A549 (cell line): ENCODE measurements at regions of chr16 and their contacts with region 1.

Region 1: DNA sequence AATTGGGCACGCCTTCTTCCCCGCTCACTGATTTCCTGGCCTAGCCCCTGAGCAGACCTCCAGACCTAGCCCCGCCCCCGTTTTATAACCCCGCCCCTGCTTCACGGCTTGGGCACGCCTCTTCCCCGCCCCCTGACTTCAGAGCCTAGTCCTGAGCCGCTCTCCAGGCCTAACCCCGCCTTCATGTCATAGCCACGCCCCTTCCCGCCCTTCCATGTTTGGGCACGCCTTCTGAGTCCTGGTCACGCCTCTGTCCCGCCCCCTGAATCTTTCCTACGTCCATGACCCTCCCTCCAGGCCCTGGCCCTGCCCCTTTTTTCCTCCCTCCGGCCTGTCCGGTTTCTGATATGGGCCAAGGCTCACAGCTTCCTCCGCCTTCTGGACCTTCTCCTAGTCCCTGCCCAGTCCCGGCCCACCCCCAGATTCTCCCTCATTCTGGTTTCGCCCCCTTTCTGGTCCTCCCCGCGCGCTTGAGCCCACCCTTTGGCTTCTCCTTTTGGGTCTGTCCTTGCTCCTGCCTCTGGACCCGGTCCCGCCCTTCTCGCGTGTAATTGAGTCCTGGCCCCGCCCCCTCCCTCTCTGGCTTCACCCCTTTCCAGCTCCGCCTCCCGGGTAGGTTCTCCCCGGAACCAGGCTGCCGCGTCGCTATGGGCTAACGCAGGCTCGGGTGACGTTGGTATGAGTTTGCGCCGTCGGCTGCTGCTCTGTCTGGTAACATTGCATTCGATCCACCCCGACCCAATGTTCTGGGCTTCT is 15.1 kb upstream of the EEF2K start:
- DNase-seq: peak; percentile 91 to 97
- ATAC-seq: peak; percentile 66 to 81
- H3K4me3 ChIP-seq: peak overlapping the region; percentile 80
- H3K27ac ChIP-seq: peak overlapping the region; percentile 82 to 88
- H3K4me1 ChIP-seq: peaks cover 14% of the 10 kb centered on the region
- CTCF ChIP-seq: no peak
- EP300 ChIP-seq: no peak
- POLR2A ChIP-seq: peak; percentile 63
- RAD21 ChIP-seq: no peak

Region 2: GRCh38 chr16:21952040-21952792 is 238.7 kb before region 1 on chr16:
- CTCF ChIA-PET with region 1: interaction called, 35 read pairs
- POLR2A ChIA-PET with region 1: interaction called, 7 read pairs
- DNase-seq: peak; percentile 66 to 78
- ATAC-seq: peak; percentile 71 to 74
- H3K4me3 ChIP-seq: peak overlapping the region; percentile 66
- H3K27ac ChIP-seq: peak overlapping the region; percentile 93 to 95
- H3K4me1 ChIP-seq: peaks cover 22% of the 10 kb centered on the region
- CTCF ChIP-seq: no peak
- EP300 ChIP-seq: no peak
- POLR2A ChIP-seq: no peak
- RAD21 ChIP-seq: no peak

Region 3: GRCh38 chr16:21994856-21995465 is 196.0 kb before region 1 on chr16:
- CTCF ChIA-PET with region 1: interaction called, 24 read pairs
- POLR2A ChIA-PET with region 1: interaction called, 10 read pairs
- DNase-seq: no peak
- ATAC-seq: no peak
- H3K4me3 ChIP-seq: no peak overlapping the region
- H3K27ac ChIP-seq: no peak overlapping the region
- H3K4me1 ChIP-seq: no peaks in the 10 kb centered on the region
- CTCF ChIP-seq: no peak
- EP300 ChIP-seq: no peak
- POLR2A ChIP-seq: no peak
- RAD21 ChIP-seq: no peak

Region 4: GRCh38 chr16:22007509-22008214 is 183.3 kb before region 1 on chr16 and contains the start of gene MOSMO:
- CTCF ChIA-PET with region 1: interaction called, 109 read pairs
- POLR2A ChIA-PET with region 1: interaction called, 3 read pairs
- DNase-seq: peak; percentile 46 to 60
- ATAC-seq: peak; percentile 90 to 91
- H3K4me3 ChIP-seq: peak within 1 kb of the TSS; percentile 90
- H3K27ac ChIP-seq: peak within 1 kb of the TSS; percentile 91 to 93
- H3K4me1 ChIP-seq: peaks cover 13% of the 10 kb centered on the region; the same call in 2 of the 3 replicates
- CTCF ChIP-seq: no peak
- EP300 ChIP-seq: no peak
- POLR2A ChIP-seq: peak; percentile 52
- RAD21 ChIP-seq: no peak
- polyA plus RNA-seq, gene MOSMO: 14.4 and 14.7 TPM in 2 replicates

Region 5: DNA sequence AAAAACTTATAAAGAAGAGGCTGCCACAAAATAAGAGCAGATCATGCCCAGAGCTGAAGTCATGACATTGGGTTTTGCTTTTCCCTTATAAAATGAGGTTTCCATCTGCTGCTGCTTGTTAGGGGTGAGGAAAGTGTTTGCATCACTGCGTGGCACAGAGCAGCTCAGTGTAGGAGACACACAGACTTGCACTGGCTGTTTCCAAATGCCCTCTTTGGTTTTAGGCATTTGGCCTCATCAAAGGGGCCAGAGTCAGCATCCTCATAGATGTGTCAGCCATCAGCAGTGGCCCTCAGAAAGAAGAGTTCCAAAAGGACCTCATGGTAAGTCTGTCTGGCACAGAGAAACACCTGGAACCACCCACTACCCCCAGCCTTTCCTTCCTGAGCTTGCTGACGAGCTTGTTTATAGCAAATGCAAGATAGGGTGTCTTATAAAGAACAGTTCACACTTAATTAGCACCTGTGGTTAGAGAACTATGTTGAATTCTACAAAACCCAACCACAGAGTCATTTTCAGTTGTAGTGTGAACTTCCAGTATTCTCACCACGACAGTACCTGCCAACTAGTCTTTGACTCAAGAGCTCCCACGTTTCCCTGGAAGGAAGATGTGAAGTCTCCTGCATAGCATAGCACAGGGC is 81.6 kb before region 1 on chr16:
- CTCF ChIA-PET with region 1: interaction called, 10 read pairs
- POLR2A ChIA-PET with region 1: no interaction called
- DNase-seq: no peak
- ATAC-seq: no peak
- H3K4me3 ChIP-seq: no peak overlapping the region
- H3K27ac ChIP-seq: no peak overlapping the region
- H3K4me1 ChIP-seq: no peaks in the 10 kb centered on the region
- CTCF ChIP-seq: no peak
- EP300 ChIP-seq: no peak
- POLR2A ChIP-seq: no peak
- RAD21 ChIP-seq: no peak

Region 6: GRCh38 chr16:22165508-22166285 is 25.3 kb before region 1 on chr16:
- CTCF ChIA-PET with region 1: interaction called, 11 read pairs
- POLR2A ChIA-PET with region 1: no interaction called
- DNase-seq: no peak
- ATAC-seq: no peak
- H3K4me3 ChIP-seq: no peak overlapping the region
- H3K27ac ChIP-seq: no peak overlapping the region
- H3K4me1 ChIP-seq: no peaks in the 10 kb centered on the region
- CTCF ChIP-seq: no peak
- EP300 ChIP-seq: no peak
- POLR2A ChIP-seq: no peak
- RAD21 ChIP-seq: no peak

Region 7: DNA sequence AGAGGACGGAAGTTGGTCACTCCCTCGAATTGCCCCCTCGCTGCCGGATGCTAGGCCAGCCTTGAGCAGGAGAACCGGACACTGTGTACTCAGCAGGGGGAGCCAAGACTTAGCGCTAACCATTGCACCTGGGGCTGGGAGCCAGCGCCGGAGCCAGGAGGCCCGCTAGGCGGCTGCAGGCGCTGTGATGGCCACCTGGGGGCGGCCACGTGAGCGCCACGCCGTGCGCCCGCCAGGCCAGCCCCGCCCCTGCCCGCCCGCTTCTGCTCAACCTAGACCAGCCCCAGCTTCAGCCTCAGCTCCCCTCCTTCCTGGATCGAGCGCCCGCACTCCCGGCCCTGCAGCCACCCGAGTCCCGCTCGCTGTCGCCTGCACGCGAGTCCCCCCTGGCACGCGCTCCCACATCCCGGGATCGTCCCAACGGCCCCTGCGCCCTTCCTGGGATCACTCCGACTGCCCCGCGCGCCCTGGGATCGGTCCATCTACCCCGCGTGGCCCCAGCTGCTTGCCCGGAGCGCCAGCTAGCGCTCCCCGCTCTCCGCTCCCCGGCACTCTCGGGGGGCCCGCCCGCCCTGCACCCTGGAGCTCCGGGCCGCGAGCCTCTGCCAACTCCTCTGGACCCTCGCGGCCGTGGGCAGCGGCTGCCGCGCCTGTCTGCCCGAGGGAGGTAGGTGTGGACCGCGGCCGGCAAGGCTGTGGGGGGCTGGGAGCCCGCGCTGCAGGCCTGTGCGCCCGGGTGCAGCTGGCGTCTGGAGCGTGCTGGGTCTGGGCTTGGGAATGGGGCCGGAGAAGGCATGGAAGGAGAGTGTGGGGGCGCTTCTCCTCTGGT is 15.3 kb after region 1 on chr16 and contains the start of gene EEF2K:
- CTCF ChIA-PET with region 1: interaction called, 87 read pairs
- POLR2A ChIA-PET with region 1: interaction called, 4 read pairs
- DNase-seq: peak; percentile 98
- ATAC-seq: peak; percentile 95 to 96
- H3K4me3 ChIP-seq: peak within 1 kb of the TSS; percentile 84
- H3K27ac ChIP-seq: peak within 1 kb of the TSS; percentile 90 to 94
- H3K4me1 ChIP-seq: peaks cover 12% of the 10 kb centered on the region
- CTCF ChIP-seq: peak; percentile 87
- EP300 ChIP-seq: no peak
- POLR2A ChIP-seq: peak; percentile 49
- RAD21 ChIP-seq: peak; percentile 70 to 90
- polyA plus RNA-seq, gene EEF2K: 8.2 and 11.6 TPM in 2 replicates